H1 (cell line): ENCODE measurements at regions of chr2 and their contacts with region 1.

Region 1: DNA sequence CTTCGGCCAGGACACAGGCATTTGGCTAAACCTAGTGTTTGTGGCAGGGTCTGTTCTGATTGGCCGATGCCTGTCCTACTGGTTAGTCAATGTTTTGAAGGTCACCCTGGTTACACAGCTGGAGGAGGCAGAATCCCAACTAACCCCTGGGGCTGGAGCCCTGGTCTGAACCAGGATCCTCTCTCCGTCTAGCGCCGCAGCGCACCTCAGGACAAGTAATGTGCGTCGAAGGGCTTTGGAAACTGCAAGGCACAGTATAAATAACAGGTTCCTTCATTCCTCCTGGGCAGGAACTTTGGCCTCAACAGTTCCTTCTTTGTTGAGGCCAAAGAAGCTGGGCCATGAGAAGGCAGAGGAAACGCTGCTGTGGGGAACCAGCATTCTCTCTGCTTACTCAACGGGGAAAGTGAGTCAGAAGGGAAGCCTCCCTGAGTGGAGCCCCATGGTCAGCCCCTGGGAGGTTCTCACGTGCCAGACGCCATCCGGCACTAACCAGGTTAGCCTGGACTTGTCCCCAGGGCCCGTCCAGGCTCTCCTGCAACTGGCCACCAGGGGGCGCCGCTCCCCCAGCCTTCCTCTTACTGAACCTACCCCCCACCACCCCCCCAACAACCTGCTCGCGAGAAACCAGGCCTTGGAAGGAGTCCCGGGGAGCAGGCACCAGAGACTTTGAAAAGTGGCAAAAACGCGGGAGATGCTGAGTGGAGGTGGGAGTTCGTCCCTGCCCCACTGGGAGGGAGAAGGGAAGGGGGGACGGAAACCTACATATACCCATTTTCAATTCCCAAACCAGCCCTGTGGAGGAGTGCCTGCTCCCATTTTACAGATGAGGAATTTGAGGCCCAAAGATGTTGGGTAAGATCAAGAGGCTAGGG is 19.8 kb downstream of the TEX44 start:
- DNase-seq: peak in 1 of 2 experiments; percentile 95
- H3K4me3 ChIP-seq: peak overlapping the region in 1 of 4 experiments; percentile 68; a peak in 2 of 8 replicates
- H3K27ac ChIP-seq: peak overlapping the region; percentile 89
- H3K4me1 ChIP-seq: peaks cover 6 to 33% (median 32%) of the 10 kb centered on the region in 4 experiments
- H3K27me3 ChIP-seq: no peaks in the 10 kb centered on the region
- CTCF ChIP-seq: peak in 2 of 3 experiments; percentile 83 to 87; a peak in 3 of 4 replicates
- EP300 ChIP-seq: 0 out of 3 replicates have a peak, but pooled peaks of 1 of the 2 experiments have one; percentile 77
- POLR2A ChIP-seq: peak in 1 of 2 experiments; percentile 64; a peak in 2 of 3 replicates
- RAD21 ChIP-seq: peak; percentile 90 to 95

Region 2: GRCh38 chr2:231563378-231563961 is 48.9 kb before region 1 on chr2:
- CTCF ChIA-PET with region 1: interaction called, 182 read pairs
- POLR2A ChIA-PET with region 1: interaction called, 7 read pairs
- DNase-seq: peak; percentile 73 to 78
- H3K4me3 ChIP-seq: no peak overlapping the region
- H3K27ac ChIP-seq: no peak overlapping the region
- H3K4me1 ChIP-seq: peaks cover 0 to 5% (median 3%) of the 10 kb centered on the region in 4 experiments; a peak in 5 of 7 replicates
- H3K27me3 ChIP-seq: no peaks in the 10 kb centered on the region
- CTCF ChIP-seq: peak; percentile 90 to 95 (median 93)
- EP300 ChIP-seq: no peak
- POLR2A ChIP-seq: no peak
- RAD21 ChIP-seq: peak; percentile 92

Region 3: GRCh38 chr2:231632559-231633142 is 20.2 kb after region 1 on chr2:
- CTCF ChIA-PET with region 1: interaction called, 42 read pairs
- POLR2A ChIA-PET with region 1: interaction called, 69 read pairs
- DNase-seq: no peak
- H3K4me3 ChIP-seq: no peak overlapping the region
- H3K27ac ChIP-seq: no peak overlapping the region
- H3K4me1 ChIP-seq: peaks cover 0 to 6% (median 3%) of the 10 kb centered on the region in 4 experiments; a peak in 4 of 7 replicates
- H3K27me3 ChIP-seq: no peaks in the 10 kb centered on the region
- CTCF ChIP-seq: no peak
- EP300 ChIP-seq: no peak
- POLR2A ChIP-seq: no peak
- RAD21 ChIP-seq: no peak

Region 4: DNA sequence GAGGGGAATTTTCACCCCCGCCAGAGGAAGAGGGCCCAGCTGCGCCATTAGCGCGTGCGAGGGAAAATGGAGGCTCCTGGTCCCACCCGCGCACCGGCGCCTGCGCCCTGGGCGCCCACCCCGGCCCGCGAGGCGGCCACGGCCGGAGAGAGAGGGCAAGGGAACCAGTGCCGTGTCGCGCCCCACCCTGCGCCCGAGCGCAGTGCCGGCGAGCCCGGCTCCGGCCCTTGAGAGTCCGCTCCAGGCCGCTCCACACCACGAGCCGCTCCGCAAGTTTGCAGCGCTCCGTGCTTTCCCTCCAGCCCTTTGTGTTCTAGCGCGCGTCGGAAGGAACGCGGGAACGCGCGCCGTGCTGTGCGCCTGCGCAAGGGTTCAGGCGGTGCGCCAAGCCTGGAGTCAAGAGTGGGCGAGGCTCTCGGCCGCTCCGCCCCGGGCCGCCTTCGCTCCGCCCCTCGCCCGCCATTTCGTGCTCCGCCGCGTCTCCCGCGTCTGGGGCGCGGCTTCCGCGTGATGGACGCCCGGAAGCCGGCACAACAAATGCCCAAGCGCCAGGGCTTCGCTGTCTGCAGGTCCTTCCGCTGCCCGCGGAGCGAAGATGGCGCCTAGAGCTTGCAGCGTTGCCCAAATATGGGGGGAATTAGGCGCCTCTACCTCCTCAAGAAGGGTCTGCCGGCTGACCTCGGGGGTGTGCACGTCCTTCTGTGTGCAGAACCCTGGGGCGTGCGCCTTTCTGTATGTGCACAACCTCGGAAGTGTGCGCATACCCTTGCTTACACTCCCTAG is 49.8 kb after region 1 on chr2:
- CTCF ChIA-PET with region 1: interaction called, 33 read pairs
- POLR2A ChIA-PET with region 1: interaction called, 88 read pairs
- DNase-seq: peak; percentile 97 to 98
- H3K4me3 ChIP-seq: peak overlapping the region; percentile 14 to 54 (median 24); a peak in 6 of 8 replicates
- H3K27ac ChIP-seq: peak overlapping the region; percentile 95
- H3K4me1 ChIP-seq: peaks cover 0 to 26% (median 10%) of the 10 kb centered on the region in 4 experiments; a peak in 6 of 7 replicates
- H3K27me3 ChIP-seq: peaks cover 0 to 10% (median 3%) of the 10 kb centered on the region in 4 experiments; a peak in 5 of 7 replicates
- CTCF ChIP-seq: 0 out of 4 replicates have a peak, but pooled peaks of 1 of the 3 experiments have one; percentile 5
- EP300 ChIP-seq: peak; percentile 42 to 63; a peak in 1 of 3 replicates
- POLR2A ChIP-seq: peak in 1 of 2 experiments; percentile 79; a peak in 2 of 3 replicates
- RAD21 ChIP-seq: peak in 1 of 2 experiments; percentile 15; a peak in 1 of 4 replicates

Region 5: DNA sequence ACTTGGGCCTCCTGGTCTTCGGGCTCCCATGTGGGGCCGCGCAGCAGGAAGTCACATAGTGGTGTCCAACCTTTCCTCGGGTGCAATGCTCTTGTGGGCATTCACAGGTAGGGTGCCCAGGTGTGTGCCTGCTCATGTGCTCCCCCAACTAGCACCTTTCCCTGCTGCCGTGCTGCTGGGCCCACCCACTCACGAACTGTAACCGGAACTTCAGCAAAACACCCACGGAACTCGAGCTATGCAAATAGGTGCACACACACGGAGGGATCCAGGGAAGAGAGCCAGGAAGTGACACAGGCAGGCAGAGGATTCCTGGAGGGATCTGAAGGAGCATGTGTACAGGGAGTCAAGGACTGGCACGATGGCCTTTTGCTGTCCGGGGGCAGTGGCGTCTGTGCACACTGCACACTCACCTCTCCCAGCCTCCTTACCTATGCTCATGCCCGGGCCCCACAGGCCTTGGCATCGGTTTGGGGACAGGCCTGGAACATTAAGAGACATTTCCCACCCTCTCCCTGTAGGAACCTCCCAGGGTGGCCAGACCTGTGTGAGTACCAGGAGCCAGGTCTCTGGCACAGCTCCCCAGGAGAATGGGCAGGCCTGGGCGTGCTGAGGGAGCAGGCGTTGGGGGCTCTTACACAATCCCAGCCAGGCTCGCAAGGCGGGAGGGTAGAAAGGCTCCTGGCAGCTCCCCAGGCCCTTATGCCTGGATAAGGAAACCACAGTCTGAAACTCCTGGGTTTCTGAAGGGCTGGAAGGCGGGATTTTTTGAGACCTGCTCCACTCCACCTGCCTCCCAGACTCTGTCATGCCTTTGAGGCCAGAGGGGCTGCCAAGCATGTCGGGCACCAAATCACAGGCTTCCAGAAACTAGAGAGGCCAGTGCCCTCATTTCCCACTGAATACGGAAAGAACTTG is 89.3 kb after region 1 on chr2:
- CTCF ChIA-PET with region 1: interaction called, 29 read pairs
- POLR2A ChIA-PET with region 1: interaction called, 132 read pairs
- DNase-seq: no peak
- H3K4me3 ChIP-seq: no peak overlapping the region
- H3K27ac ChIP-seq: no peak overlapping the region; the same call in 1 of the 2 replicates
- H3K4me1 ChIP-seq: peaks cover 0 to 10% (median 3%) of the 10 kb centered on the region in 4 experiments; a peak in 5 of 7 replicates
- H3K27me3 ChIP-seq: no peaks in the 10 kb centered on the region
- CTCF ChIP-seq: no peak
- EP300 ChIP-seq: no peak
- POLR2A ChIP-seq: no peak
- RAD21 ChIP-seq: no peak